ENCODE measurements at regions of chr22 and their contacts with region 1.

Region 1: DNA sequence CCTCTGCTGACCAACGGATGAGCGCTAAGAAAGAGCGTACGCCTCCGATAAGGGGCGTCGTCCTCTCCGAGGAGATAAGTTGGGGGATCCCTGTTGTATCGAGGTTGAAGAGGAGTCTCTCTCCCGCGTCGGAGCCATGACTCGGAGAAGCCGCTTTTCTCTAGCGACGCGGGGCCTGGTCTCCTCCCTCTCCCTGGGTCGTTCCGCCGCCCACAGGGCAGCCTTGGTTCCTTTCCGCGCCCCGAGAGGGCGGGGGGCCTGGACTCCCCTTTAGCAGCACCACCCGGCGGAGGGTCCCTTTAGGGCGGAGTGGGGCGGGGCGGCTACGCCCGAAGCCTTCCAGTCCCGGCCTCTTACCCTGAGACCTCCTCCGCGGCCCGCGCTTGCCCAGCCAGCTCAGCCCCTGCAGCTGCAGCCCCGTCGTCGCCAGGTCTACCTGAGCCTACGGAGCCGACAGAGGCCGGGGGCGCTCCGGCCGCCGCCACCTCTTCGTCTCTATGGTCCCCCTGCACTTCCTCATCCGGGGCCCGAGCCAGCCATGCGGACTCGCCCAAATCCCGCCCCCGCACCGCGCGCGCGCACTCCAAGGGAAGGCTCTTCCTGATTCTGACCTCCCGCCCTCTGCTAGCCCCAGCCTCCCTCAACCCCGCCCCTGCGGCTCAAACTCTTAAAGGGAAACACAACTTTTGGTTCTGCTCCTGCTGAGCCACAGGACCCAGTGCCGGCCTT is at the start of gene PRR14L:
- DNase-seq: peak; percentile 93 to 99 (median 98)
- ATAC-seq: peak; percentile 72
- H3K4me3 ChIP-seq: peak within 1 kb of the TSS; percentile 77
- H3K4me3 Mint-ChIP-seq: peak within 1 kb of the TSS; percentile 98
- H3K27ac ChIP-seq: peak within 1 kb of the TSS; percentile 72 to 85
- H3K27ac Mint-ChIP-seq: peak within 1 kb of the TSS; percentile 97
- H3K4me1 ChIP-seq: peaks cover 45% of the 10 kb centered on the region
- H3K4me1 Mint-ChIP-seq: peaks cover 64% of the 10 kb centered on the region
- H3K27me3 ChIP-seq: no peaks in the 10 kb centered on the region
- H3K27me3 Mint-ChIP-seq: no peaks in the 10 kb centered on the region
- CTCF ChIP-seq: no peak
- total RNA-seq, gene PRR14L: 23.4 to 24.9 TPM

Region 2: DNA sequence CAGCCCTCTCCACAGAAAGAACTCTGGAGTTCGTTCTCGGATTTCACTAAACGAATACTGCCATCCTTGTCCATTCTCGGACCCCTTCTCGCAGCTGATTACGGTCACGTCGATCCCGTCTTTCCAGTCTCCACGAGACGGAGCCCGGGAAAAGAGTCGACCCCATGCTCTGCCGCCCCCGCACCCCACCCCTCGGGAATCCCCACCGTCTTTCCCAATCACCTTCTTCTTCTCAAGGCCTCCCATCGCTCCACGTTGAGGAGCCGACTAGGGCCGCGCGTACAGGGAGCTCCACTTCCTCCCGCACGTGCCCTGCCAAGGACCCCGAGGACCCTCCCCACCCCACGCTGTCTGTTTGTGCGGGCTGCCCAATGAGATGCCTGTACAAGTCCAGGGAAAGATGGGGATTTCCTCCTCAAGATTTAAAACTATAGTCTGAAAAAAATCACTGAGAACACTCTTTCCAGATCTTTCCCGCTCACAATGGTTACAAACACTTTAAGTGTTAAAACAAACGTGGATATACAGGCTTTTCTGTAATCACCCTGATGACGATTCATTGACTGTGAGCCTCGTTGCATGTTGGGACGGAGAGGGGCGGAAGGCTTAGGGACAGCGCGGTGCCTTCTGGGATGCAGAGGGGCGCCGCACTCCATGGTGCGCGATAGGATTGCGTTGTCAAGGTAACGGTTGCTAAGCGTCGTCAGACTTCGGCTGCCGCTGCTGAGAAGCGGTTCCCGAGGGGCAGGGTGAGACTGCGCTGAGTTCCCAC is 1158.0 kb before region 1 on chr22 and contains the start of gene PES1:
- CTCF ChIA-PET with region 1: no interaction called
- POLR2A ChIA-PET with region 1: no interaction called
- intact Hi-C with region 1: loop called in 1 of 2 experiments (anchors 10 kb)
- DNase-seq: peak; percentile 91 to 99 (median 94)
- ATAC-seq: peak; percentile 96
- H3K4me3 ChIP-seq: peak within 1 kb of the TSS; percentile 96
- H3K4me3 Mint-ChIP-seq: no peak within 1 kb of the TSS
- H3K27ac ChIP-seq: peak within 1 kb of the TSS; percentile 85 to 97
- H3K27ac Mint-ChIP-seq: no peak within 1 kb of the TSS
- H3K4me1 ChIP-seq: peaks cover 16% of the 10 kb centered on the region
- H3K4me1 Mint-ChIP-seq: no peaks in the 10 kb centered on the region
- H3K27me3 ChIP-seq: no peaks in the 10 kb centered on the region
- H3K27me3 Mint-ChIP-seq: no peaks in the 10 kb centered on the region
- CTCF ChIP-seq: no peak
- total RNA-seq, gene PES1: 28.4 to 30.5 TPM

Region 3: GRCh38 chr22:31399211-31400028 is 350.4 kb before region 1 on chr22 and contains the start of gene DRG1:
- CTCF ChIA-PET with region 1: no interaction called
- POLR2A ChIA-PET with region 1: no interaction called
- intact Hi-C with region 1: loop called in 1 of 2 experiments (anchors 5 kb)
- DNase-seq: peak; percentile 92 to 98 (median 96)
- ATAC-seq: peak; percentile 97
- H3K4me3 ChIP-seq: peak within 1 kb of the TSS; percentile 90
- H3K4me3 Mint-ChIP-seq: peak within 1 kb of the TSS; percentile 94
- H3K27ac ChIP-seq: peak within 1 kb of the TSS; percentile 77 to 81
- H3K27ac Mint-ChIP-seq: peak within 1 kb of the TSS; percentile 83
- H3K4me1 ChIP-seq: peaks cover 22% of the 10 kb centered on the region
- H3K4me1 Mint-ChIP-seq: peaks cover 18% of the 10 kb centered on the region
- H3K27me3 ChIP-seq: no peaks in the 10 kb centered on the region
- H3K27me3 Mint-ChIP-seq: no peaks in the 10 kb centered on the region
- CTCF ChIP-seq: no peak
- total RNA-seq, gene DRG1: 57.3 to 72.8 TPM

Region 4: DNA sequence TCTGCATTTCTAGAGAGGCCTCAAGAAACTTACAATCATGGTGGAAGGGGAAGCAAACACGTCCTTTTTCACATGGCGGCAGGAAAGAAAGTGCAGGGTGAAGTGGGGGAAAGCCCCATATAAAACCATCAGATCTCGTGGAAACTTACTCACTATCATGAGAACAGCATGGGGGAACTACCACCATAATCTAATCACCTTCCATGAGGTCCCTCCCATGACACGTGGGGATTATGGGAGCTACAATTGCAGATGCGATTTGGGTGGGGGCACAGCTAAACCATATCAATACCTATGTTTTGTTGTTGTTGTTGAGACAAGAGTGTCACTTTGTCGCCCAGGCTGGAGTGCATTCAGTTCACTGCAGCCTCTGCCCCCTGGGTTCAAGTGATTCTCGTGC is 223.5 kb before region 1 on chr22:
- CTCF ChIA-PET with region 1: no interaction called
- POLR2A ChIA-PET with region 1: no interaction called
- intact Hi-C with region 1: no loop called
- DNase-seq: peak in 2 of 14 experiments; percentile 54 to 64
- ATAC-seq: peak; percentile 29
- H3K4me3 ChIP-seq: no peak overlapping the region
- H3K4me3 Mint-ChIP-seq: no peak overlapping the region
- H3K27ac ChIP-seq: no peak overlapping the region
- H3K27ac Mint-ChIP-seq: peak overlapping the region; percentile 69
- H3K4me1 ChIP-seq: peaks cover 18% of the 10 kb centered on the region
- H3K4me1 Mint-ChIP-seq: peaks cover 50% of the 10 kb centered on the region
- H3K27me3 ChIP-seq: no peaks in the 10 kb centered on the region
- H3K27me3 Mint-ChIP-seq: no peaks in the 10 kb centered on the region
- CTCF ChIP-seq: no peak

Region 5: DNA sequence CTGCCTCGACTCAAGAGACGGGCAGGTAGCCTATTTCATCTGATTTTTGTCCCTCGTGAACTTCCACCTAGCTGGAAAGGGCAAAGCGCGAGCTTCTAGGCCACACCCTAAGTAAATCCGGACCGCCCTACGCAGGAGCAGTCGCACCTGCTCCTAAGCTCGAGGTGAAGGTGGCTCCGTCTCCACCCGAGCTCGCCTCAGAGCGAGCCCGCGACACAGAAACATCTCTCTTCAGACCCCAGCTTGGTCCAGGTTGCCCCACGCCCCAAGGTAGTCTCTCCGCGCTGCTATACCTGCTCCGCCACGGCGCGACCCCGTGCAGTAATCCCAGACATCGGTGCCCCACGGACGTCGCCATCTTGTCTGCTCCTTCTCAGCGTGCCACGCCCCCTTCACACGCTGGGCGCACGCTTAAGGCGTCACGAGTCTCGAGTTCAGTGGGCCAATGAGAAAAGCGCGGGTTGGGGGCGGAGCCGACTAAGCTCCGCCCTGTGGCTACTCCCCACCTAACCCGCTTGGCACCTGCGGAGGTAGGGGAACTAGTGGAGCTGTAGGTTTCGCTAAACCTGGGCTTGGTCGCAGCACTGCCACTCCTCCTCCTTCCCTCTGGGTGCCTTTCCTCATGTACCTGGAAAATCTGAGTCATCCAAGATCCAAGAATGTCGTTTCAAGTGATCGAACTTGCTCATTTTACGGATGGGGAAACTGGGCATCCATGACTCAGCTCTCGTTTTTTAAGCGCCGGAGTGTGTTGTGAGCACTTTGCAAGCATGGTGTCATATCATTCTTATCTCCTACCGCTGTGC is 87.7 kb before region 1 on chr22 and contains the start of gene PISD:
- CTCF ChIA-PET with region 1: interaction called, 4 read pairs
- POLR2A ChIA-PET with region 1: interaction called, 19 read pairs
- intact Hi-C with region 1: loop called (anchors 1 kb)
- DNase-seq: peak; percentile 92 to 99 (median 96)
- ATAC-seq: peak; percentile 90
- H3K4me3 ChIP-seq: peak within 1 kb of the TSS; percentile 95
- H3K4me3 Mint-ChIP-seq: peak within 1 kb of the TSS; percentile 99
- H3K27ac ChIP-seq: peak within 1 kb of the TSS; percentile 62 to 70
- H3K27ac Mint-ChIP-seq: peak within 1 kb of the TSS; percentile 98
- H3K4me1 ChIP-seq: peaks cover 29% of the 10 kb centered on the region
- H3K4me1 Mint-ChIP-seq: peaks cover 38% of the 10 kb centered on the region
- H3K27me3 ChIP-seq: no peaks in the 10 kb centered on the region
- H3K27me3 Mint-ChIP-seq: no peaks in the 10 kb centered on the region
- CTCF ChIP-seq: no peak
- total RNA-seq, gene PISD: 23.4 to 25.3 TPM

Region 6: DNA sequence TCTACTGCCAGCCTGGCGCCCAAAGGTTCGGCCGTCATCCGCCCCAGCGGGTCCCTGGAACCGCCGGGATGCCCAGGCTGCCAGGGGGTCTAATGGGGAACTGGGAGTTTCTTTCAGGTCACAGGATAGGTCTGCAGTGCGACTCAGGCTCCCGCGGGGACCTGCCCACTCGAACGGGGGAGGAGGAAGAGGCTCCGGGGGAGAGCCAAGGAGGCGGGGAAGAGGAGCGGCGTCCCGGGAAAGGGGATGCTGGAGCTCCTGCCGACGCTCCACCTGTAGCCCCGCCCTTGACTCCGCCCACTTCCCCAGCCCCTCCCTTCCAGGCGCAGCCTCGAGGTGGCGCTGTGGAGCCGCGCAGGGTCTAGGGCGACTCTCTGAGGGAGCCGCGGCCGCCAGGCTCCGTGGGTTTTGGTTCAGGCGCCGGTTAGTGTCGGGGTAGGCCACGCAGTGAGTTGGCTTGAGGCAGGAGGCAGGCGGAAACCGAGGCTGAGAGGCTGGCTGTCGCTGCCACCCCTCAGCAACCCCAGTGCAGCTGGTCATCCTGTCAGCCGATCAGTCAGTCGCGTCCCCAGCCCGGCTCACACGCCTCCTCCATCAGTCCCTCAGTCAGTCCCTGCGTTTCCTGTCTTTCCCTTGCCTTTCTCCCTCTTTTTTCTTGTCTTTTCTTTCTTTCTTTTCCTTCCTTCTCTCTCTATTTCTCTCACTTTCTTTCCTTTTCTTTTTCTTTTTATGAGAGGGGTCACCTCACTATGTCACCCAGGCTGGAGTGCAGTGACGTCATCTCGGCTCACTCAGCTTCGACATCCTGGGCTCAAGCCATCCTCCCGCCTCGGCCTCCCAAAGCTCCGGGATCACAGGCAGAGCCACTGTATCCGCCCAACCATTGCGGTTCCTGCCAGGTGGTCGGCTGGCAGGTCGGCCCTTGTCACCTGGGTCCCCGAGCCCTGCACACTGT is 221.0 kb after region 1 on chr22:
- CTCF ChIA-PET with region 1: interaction called, 5 read pairs
- POLR2A ChIA-PET with region 1: interaction called, 3 read pairs
- intact Hi-C with region 1: loop called in 1 of 2 experiments (anchors 5 kb)
- DNase-seq: peak; percentile 77 to 93 (median 87)
- ATAC-seq: peak; percentile 93
- H3K4me3 ChIP-seq: peak overlapping the region; percentile 56
- H3K4me3 Mint-ChIP-seq: peak overlapping the region; percentile 82
- H3K27ac ChIP-seq: no peak overlapping the region
- H3K27ac Mint-ChIP-seq: peak overlapping the region; percentile 3
- H3K4me1 ChIP-seq: peaks cover 20% of the 10 kb centered on the region
- H3K4me1 Mint-ChIP-seq: peaks cover 13% of the 10 kb centered on the region
- H3K27me3 ChIP-seq: no peaks in the 10 kb centered on the region
- H3K27me3 Mint-ChIP-seq: no peaks in the 10 kb centered on the region
- CTCF ChIP-seq: peak; percentile 90